ENCODE measurements at regions of chr5 and their contacts with region 1.

Region 1: GRCh38 chr5:54844905-54845566 is 140.4 kb downstream of the ESM1 start:
- DNase-seq: peak; percentile 60 to 78 (median 74)
- H3K4me3 ChIP-seq: peak overlapping the region in 2 of 7 experiments; percentile 15 to 69
- H3K27ac ChIP-seq: no peak overlapping the region
- H3K4me1 ChIP-seq: no peaks in the 10 kb centered on the region
- H3K27me3 ChIP-seq: no peaks in the 10 kb centered on the region

Region 2: DNA sequence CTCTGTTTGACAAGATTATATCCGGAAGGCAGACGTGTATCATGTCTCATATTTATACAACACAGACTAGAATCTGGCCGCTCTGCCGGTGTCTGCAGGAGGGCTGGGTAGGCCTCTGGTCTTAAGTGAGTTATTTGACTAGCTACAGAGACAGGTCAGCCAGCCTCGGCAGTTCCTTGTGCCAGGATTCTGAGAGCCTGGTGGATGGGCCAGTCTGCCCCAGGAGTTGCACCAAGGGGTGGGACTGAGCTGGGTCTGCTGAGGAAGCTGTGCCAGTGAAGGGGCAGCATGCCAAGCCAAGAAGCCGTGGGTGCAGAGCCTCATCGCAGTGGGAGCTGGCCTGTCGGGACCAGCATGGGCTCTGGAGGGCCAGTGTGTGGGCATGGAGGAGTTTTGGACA is 320.3 kb before region 1 on chr5:
- CTCF ChIA-PET with region 1: interaction called, 91 read pairs
- POLR2A ChIA-PET with region 1: no interaction called
- DNase-seq: no peak
- H3K4me3 ChIP-seq: no peak overlapping the region
- H3K27ac ChIP-seq: no peak overlapping the region
- H3K4me1 ChIP-seq: peaks cover 11 to 25% (median 15%) of the 10 kb centered on the region in 4 experiments
- H3K27me3 ChIP-seq: no peaks in the 10 kb centered on the region

Region 3: DNA sequence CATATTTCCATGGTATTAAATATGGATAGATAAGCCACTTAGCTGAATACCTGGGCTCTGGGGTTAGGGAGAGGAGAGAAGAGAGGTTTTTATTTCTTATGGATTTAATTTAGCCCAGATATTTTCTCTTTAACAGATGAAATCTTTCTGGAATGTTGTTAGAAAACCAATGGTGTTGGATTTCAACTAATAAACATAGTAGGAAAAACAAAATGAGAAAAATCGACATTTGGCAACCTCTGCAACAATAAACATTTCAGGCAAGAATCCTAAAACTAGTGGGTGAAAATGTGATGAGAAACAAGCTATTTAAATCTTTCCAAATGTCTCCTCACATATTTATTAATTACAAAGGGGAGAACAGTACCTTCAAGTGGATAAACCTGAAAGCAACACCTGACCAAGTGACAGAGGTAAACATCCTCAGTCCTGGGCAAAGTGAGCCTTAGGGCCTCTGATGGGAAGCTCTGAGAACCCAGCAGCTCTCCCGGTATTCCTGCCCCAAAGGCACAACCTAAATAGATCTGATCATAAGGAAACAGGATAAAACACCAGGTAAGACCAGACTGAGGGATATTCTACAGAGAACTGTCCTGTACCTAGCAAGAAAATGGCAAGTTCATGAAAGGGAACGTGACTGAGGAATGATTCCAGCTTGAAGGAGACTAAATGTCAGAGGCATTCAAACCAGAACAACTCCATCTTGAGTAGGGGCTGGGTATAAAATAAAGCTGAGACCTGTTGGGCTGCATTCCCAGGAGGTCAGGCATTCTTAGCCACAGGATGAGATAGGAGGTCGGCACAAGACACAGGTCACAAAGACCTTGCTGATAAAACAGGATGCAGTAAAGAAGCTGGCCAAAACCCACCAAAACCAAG is 23.4 kb before region 1 on chr5:
- CTCF ChIA-PET with region 1: no interaction called
- POLR2A ChIA-PET with region 1: no interaction called
- DNase-seq: no peak
- H3K4me3 ChIP-seq: no peak overlapping the region
- H3K27ac ChIP-seq: no peak overlapping the region
- H3K4me1 ChIP-seq: no peaks in the 10 kb centered on the region
- H3K27me3 ChIP-seq: no peaks in the 10 kb centered on the region

Measured in common myeloid progenitor, CD34-positive (primary cell).